ENCODE measurements at regions of chr2 and their contacts with region 1.

Region 1: DNA sequence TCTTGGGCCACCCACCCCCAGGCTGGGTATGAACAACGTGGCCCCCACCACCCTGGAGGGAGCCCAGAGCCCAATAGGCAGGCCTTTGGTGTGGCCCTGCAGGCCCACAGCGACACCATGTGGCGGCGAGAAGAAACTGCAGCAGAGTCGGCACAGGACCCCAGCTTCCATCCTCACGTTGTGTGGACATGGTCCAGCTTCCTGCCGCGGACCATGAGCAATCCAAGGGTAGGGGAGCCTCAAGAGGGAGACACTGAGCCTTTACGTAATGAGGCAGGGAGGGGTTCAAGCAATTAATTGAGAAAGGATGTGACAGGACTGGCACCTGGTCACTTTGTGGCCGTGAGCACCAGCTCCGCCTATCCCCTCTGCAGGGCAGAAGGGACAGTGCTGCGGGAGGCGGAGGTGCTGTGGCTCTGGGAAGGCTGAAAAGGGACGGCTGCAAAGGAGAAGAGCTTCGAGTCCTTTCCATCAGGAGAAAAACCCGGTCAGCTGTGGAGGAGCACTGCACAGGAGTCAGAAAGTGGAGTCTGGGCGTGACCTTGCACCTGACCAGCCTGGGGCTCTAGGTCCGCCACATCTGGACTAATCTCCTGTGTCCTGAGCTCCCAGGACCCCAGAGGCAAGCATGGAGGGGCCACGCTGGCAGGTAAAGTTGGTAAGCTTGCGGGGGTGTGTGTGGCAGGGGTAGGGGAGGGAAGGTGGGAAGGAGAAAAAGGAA is 44.8 kb downstream of the TMEM37 start:
- DNase-seq: peak in 4 of 5 donors; percentile 45 to 65 (median 60)
- ATAC-seq: peak; percentile 40 to 78 (median 69)
- H3K4me3 ChIP-seq: no peak overlapping the region
- H3K27ac ChIP-seq: peak overlapping the region in 3 of 12 donors; percentile 48 to 67 (median 51)
- H3K4me1 ChIP-seq: peaks cover 0 to 41% (median 14%) of the 10 kb centered on the region in 12 donors
- H3K27me3 ChIP-seq: no peaks in the 10 kb centered on the region
- CTCF ChIP-seq: peak; percentile 85 to 99 (median 96)
- POLR2A ChIP-seq: no peak

Region 2: GRCh38 chr2:118784860-118785259 is 691.6 kb before region 1 on chr2:
- intact Hi-C with region 1: no loop called
- DNase-seq: no peak
- ATAC-seq: no peak
- H3K4me3 ChIP-seq: no peak overlapping the region
- H3K27ac ChIP-seq: no peak overlapping the region
- H3K4me1 ChIP-seq: no peaks in the 10 kb centered on the region
- H3K27me3 ChIP-seq: peaks cover 0 to 41% (median 4%) of the 10 kb centered on the region in 9 donors
- CTCF ChIP-seq: no peak
- POLR2A ChIP-seq: no peak

Region 3: DNA sequence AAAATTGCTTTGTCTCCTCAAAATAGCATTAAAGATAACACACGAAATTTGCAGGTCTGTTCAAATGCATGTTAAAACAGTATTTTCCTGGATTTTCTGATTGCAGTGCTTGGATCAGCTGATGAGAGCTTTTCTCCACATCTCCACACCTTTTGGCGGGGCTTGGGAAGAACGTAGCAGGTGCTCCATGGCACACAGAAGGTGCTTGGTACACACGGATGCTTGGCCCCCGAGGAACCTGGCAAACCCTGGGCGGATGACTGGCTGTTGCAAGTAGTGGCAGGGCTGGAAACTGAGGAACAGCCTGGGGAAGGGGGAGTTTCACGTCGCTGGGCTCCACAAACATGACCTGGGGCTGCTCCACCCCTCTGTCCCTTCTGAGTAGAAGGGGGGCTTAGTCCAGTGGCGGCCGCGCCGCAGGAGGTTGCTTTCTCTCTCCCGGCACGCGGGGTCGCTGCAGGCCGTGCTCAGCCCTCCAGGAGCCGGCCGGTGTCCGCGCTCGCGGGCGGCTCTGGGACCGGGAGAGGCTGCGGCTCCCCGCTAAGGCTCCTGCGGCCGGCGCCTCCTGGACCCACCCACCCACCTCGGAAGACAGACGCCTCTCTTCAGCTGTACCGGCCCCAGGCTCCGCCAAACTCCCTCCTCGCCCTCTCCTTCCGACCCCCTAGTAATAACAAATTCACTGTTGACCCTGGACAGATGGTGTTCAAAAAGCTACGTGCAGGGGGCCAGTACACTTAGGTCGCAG is 465.1 kb before region 1 on chr2:
- intact Hi-C with region 1: loop called in 5 of 10 experiments (anchors 5 to 10 kb)
- DNase-seq: peak; percentile 36 to 72 (median 48)
- ATAC-seq: peak; percentile 75 to 96 (median 90)
- H3K4me3 ChIP-seq: peak overlapping the region in 2 of 12 donors; percentile 9 to 21
- H3K27ac ChIP-seq: no peak overlapping the region
- H3K4me1 ChIP-seq: no peaks in the 10 kb centered on the region
- H3K27me3 ChIP-seq: peaks cover 0 to 53% (median 17%) of the 10 kb centered on the region in 9 donors
- CTCF ChIP-seq: peak; percentile 42 to 72 (median 62)
- POLR2A ChIP-seq: no peak

Region 4: GRCh38 chr2:119234377-119235019 is 242.0 kb before region 1 on chr2:
- intact Hi-C with region 1: loop called in 1 of 10 experiments (anchors 10 kb)
- DNase-seq: no peak
- ATAC-seq: peak in 3 of 4 donors; percentile 55 to 59 (median 57)
- H3K4me3 ChIP-seq: no peak overlapping the region
- H3K27ac ChIP-seq: no peak overlapping the region
- H3K4me1 ChIP-seq: peaks cover 0 to 3% (median 0%) of the 10 kb centered on the region in 12 donors
- H3K27me3 ChIP-seq: no peaks in the 10 kb centered on the region
- CTCF ChIP-seq: peak in 6 of 12 donors; percentile 4 to 45 (median 26)
- POLR2A ChIP-seq: no peak

Region 5: GRCh38 chr2:119305497-119306195 is 170.8 kb before region 1 on chr2:
- intact Hi-C with region 1: loop called in 7 of 10 experiments (anchors 5 to 10 kb)
- DNase-seq: no peak
- ATAC-seq: peak in 3 of 4 donors; percentile 44 to 53 (median 47)
- H3K4me3 ChIP-seq: peak overlapping the region in 8 of 12 donors; percentile 12 to 48 (median 33)
- H3K27ac ChIP-seq: peak overlapping the region; percentile 37 to 85 (median 72)
- H3K4me1 ChIP-seq: peaks cover 0 to 24% (median 6%) of the 10 kb centered on the region in 12 donors
- H3K27me3 ChIP-seq: no peaks in the 10 kb centered on the region
- CTCF ChIP-seq: no peak
- POLR2A ChIP-seq: no peak

Region 6: DNA sequence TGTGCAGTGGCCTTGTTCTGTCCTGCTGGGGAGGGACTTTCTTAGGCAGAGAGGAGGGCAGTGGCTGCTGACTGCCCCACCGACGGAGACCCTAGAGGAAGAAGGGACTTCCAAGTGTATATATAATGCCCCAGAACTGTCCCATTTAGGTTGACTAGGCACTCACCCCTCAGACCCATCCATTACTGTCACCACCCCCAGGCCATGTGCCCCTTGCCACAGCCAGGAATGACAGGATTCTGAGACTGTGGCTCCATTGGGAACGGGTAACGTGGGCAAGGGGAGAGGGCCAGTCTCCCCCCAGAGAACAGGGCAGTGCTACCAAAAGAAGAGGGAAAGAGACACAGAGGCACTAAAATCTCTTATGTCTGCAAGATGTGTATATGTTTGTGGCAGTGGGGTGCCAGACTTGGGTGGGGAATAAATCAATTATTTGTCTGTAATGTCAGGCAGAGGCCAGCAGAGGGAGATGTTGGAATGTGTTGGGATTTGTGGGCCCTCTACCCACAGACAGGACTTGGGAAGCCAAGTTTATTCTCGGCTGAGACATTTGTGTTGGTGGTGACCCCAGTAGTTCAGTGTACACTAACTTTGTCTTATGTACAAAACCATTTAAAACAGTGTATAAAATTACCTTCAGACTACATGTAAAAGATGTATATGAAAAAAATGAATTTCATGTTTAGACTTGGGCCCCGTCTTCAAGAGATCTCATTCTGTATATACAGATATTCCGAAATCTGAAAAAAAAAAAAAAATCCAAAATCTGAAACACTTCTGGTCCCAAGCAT is 68.8 kb before region 1 on chr2:
- intact Hi-C with region 1: loop called (anchors 1 to 2 kb)
- DNase-seq: peak in 3 of 5 donors; percentile 28 to 55 (median 49)
- ATAC-seq: peak; percentile 32 to 78 (median 68)
- H3K4me3 ChIP-seq: no peak overlapping the region
- H3K27ac ChIP-seq: no peak overlapping the region
- H3K4me1 ChIP-seq: peaks cover 0 to 11% (median 6%) of the 10 kb centered on the region in 12 donors
- H3K27me3 ChIP-seq: no peaks in the 10 kb centered on the region
- CTCF ChIP-seq: peak; percentile 60 to 85 (median 79)
- POLR2A ChIP-seq: no peak

Measured in heart left ventricle (tissue), 16 donors.